OCI-LY7 (cell line): ENCODE measurements at regions of chr2 and their contacts with region 1.

Region 1: GRCh38 chr2:88874063-88874657 is 182.7 kb downstream of the RPIA start:
- DNase-seq: peak; percentile 72
- H3K4me3 ChIP-seq: no peak overlapping the region
- H3K27ac ChIP-seq: no peak overlapping the region
- H3K4me1 ChIP-seq: peaks cover 37% of the 10 kb centered on the region
- CTCF ChIP-seq: peak; percentile 87

Region 2: GRCh38 chr2:88691339-88692183 is 182.6 kb before region 1 on chr2 and contains the start of gene RPIA:
- CTCF ChIA-PET with region 1: no interaction called
- POLR2A ChIA-PET with region 1: interaction called, 3 read pairs
- intact Hi-C with region 1: loop called (anchors 5 kb)
- DNase-seq: peak; percentile 99
- H3K4me3 ChIP-seq: peak within 1 kb of the TSS; percentile 85
- H3K27ac ChIP-seq: peak within 1 kb of the TSS; percentile 54
- H3K4me1 ChIP-seq: peaks cover 27% of the 10 kb centered on the region
- CTCF ChIP-seq: peak; percentile 72
- total RNA-seq, gene RPIA: 31.6 and 36.9 TPM in 2 replicates

Region 3: DNA sequence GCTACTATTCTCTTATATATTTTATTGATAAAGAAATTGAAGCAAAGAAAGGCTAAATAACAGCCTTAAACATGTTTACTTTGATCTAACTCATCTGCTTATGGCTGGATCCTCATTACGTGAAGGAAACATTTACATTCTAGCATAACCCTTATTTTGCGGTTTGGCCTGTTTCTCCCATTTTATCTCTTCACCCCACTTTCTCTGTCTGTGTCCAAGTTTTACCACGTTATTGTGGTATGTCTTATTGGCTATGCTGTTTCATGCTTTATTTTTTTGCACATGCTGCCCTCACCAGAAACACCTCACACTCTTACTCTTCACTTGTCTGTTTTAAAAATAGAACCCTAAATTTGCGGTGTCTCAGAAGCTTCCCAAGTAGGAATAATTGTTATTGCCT is 104.1 kb before region 1 on chr2:
- CTCF ChIA-PET with region 1: no interaction called
- POLR2A ChIA-PET with region 1: no interaction called
- intact Hi-C with region 1: no loop called
- DNase-seq: no peak
- H3K4me3 ChIP-seq: peak overlapping the region; percentile 56
- H3K27ac ChIP-seq: peak overlapping the region; percentile 3
- H3K4me1 ChIP-seq: peaks cover 22% of the 10 kb centered on the region
- CTCF ChIP-seq: no peak